MCF 10A (cell line): ENCODE measurements at regions of chr9 and their contacts with region 1.

Region 1: GRCh38 chr9:127214421-127215267 is 49.9 kb upstream of the GARNL3 start:
- DNase-seq: peak; percentile 76
- H3K4me3 Mint-ChIP-seq: no peak overlapping the region
- H3K27ac Mint-ChIP-seq: no peak overlapping the region
- H3K4me1 Mint-ChIP-seq: peaks cover 6% of the 10 kb centered on the region
- H3K27me3 Mint-ChIP-seq: peaks cover 12% of the 10 kb centered on the region
- CTCF ChIP-seq: peak; percentile 73

Region 2: DNA sequence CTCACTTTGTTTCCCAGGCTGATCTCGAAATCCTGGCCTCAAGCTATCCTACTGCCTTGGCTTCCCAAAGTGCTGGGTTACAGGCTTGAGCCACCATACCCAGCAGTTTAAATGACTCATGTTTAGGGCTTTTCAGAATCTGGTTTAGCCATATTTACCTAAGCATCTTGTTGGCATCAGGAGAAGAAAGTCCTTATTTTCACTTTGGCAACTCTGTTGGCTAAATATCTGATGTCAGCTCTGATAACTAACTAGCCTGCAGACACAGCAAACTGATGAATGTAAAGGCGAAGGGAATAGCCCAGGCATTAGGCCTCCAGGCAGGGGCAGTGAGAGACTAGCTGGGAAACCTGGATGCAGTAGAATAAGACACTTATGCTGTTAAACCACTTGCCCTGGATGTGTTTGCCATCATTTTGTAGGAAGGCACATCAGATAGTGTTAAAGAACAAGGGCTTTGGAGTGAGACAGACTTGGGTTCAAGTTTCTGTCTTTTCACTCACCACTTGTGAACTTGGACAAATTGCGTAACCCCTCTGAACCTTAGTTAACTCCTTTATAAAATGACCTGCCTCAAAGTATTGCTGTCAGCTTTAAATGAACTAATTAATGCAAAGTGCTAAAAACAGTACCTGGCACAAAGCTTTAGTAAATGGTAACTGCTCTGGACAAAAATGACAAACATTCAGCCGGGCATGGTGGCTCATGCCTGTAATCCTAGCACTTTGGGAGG is 15.2 kb after region 1 on chr9:
- CTCF ChIA-PET with region 1: interaction called, 10 read pairs
- POLR2A ChIA-PET with region 1: interaction called, 4 read pairs
- intact Hi-C with region 1: no loop called
- DNase-seq: no peak
- H3K4me3 Mint-ChIP-seq: no peak overlapping the region
- H3K27ac Mint-ChIP-seq: no peak overlapping the region
- H3K4me1 Mint-ChIP-seq: no peaks in the 10 kb centered on the region
- H3K27me3 Mint-ChIP-seq: no peaks in the 10 kb centered on the region
- CTCF ChIP-seq: no peak

Region 3: DNA sequence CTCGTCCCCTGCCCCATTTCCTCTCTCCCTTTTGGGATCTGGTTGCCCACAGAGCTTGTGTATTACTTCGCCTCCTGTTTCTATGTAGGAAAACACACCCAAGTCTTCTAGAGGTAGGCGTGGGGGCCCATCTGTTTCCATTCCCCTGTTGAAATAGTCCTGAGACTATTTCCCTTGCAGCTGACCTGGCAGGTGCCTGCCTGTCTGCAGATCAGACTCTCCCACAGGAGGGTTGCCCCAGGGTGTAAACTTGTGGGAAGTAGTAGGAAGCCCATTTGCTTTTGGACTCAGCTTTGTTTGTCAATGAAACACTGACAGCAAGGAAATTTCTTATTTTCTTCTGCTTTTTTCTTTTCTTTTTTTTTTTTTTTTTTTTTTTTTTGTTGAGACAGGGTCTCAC is 33.6 kb after region 1 on chr9:
- CTCF ChIA-PET with region 1: no interaction called
- POLR2A ChIA-PET with region 1: no interaction called
- intact Hi-C with region 1: no loop called
- DNase-seq: no peak
- H3K4me3 Mint-ChIP-seq: no peak overlapping the region
- H3K27ac Mint-ChIP-seq: no peak overlapping the region
- H3K4me1 Mint-ChIP-seq: peaks cover 4% of the 10 kb centered on the region
- H3K27me3 Mint-ChIP-seq: no peaks in the 10 kb centered on the region
- CTCF ChIP-seq: no peak

Region 4: GRCh38 chr9:127347831-127348779 is 133.5 kb after region 1 on chr9:
- CTCF ChIA-PET with region 1: interaction called, 6 read pairs
- POLR2A ChIA-PET with region 1: no interaction called
- intact Hi-C with region 1: loop called (anchors 1 kb)
- DNase-seq: peak; percentile 38
- H3K4me3 Mint-ChIP-seq: no peak overlapping the region
- H3K27ac Mint-ChIP-seq: no peak overlapping the region
- H3K4me1 Mint-ChIP-seq: no peaks in the 10 kb centered on the region
- H3K27me3 Mint-ChIP-seq: no peaks in the 10 kb centered on the region
- CTCF ChIP-seq: peak; percentile 41

Region 5: DNA sequence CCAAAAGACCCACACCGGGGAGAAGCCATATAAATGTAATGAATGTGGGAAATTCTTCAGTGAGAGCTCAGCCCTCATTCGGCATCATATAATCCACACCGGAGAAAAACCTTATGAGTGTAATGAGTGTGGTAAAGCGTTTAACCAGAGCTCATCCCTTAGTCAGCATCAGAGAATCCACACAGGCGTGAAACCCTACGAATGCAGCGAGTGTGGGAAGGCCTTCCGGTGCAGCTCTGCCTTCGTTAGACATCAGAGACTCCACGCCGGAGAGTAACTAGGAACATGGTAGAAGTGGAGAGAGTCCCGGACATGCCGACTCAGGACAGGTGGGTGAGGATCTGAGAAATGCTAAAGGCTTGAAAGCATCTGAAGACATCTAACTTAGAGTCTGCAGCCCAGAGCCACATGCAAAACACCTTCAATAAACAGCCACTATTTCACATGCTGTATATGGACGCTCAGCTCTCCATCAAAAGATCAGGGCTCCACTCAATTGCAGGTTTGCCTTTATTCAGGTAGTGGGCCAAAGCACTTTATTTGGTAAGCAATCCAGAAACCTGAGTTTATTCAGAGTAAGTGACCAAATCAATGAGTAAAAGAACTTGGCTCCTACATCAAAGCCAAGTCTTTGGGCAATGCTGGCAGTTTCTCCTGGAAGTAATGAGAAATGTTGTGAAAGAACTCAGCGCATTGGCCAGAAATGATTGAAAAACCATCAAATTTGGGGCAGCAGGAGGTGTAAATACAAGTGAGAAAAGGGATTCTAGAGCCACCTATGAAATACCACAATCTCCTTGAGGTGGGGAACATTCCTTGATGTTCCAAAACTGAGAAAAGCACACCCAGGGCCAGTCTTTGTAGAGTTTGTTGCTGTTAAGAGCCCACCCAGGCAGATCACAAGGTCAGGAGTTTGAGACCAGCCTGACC is 230.5 kb after region 1 on chr9:
- CTCF ChIA-PET with region 1: interaction called, 4 read pairs
- POLR2A ChIA-PET with region 1: interaction called, 5 read pairs
- intact Hi-C with region 1: loop called (anchors 10 kb)
- DNase-seq: peak; percentile 67
- H3K4me3 Mint-ChIP-seq: no peak overlapping the region
- H3K27ac Mint-ChIP-seq: peak overlapping the region; percentile 66
- H3K4me1 Mint-ChIP-seq: peaks cover 48% of the 10 kb centered on the region
- H3K27me3 Mint-ChIP-seq: no peaks in the 10 kb centered on the region
- CTCF ChIP-seq: no peak